Panc1 (cell line): ENCODE measurements at regions of chr16 and their contacts with region 1.

Region 1: GRCh38 chr16:30628627-30629540 is 18.7 kb upstream of the ZNF689 start:
- DNase-seq: peak; percentile 84
- ATAC-seq: peak; percentile 98
- H3K4me3 ChIP-seq: peak overlapping the region; percentile 33 to 61
- H3K27ac ChIP-seq: peak overlapping the region; percentile 76
- H3K4me1 ChIP-seq: peaks cover 5% of the 10 kb centered on the region; the same call in 1 of the 2 replicates
- H3K27me3 ChIP-seq: no peaks in the 10 kb centered on the region
- CTCF ChIP-seq: peak; percentile 95

Region 2: GRCh38 chr16:30355144-30355894 is 273.6 kb before region 1 on chr16 and contains the start of gene CD2BP2:
- CTCF ChIA-PET with region 1: no interaction called
- POLR2A ChIA-PET with region 1: no interaction called
- in situ Hi-C with region 1: no loop called
- intact Hi-C with region 1: no loop called
- DNase-seq: peak; percentile 98
- ATAC-seq: peak; percentile 92
- H3K4me3 ChIP-seq: peak within 1 kb of the TSS; percentile 98 to 99
- H3K27ac ChIP-seq: peak within 1 kb of the TSS; percentile 99
- H3K4me1 ChIP-seq: peaks cover 49% of the 10 kb centered on the region
- H3K27me3 ChIP-seq: no peaks in the 10 kb centered on the region
- CTCF ChIP-seq: no peak
- total RNA-seq, gene CD2BP2: 90.7 TPM

Region 3: GRCh38 chr16:30526823-30527635 is 101.9 kb before region 1 on chr16:
- CTCF ChIA-PET with region 1: no interaction called
- POLR2A ChIA-PET with region 1: interaction called, 11 read pairs
- in situ Hi-C with region 1: no loop called
- intact Hi-C with region 1: no loop called
- DNase-seq: peak; percentile 82
- ATAC-seq: peak; percentile 95
- H3K4me3 ChIP-seq: peak overlapping the region; percentile 69 to 74
- H3K27ac ChIP-seq: peak overlapping the region; percentile 97
- H3K4me1 ChIP-seq: peaks cover 17% of the 10 kb centered on the region
- H3K27me3 ChIP-seq: no peaks in the 10 kb centered on the region
- CTCF ChIP-seq: no peak

Region 4: DNA sequence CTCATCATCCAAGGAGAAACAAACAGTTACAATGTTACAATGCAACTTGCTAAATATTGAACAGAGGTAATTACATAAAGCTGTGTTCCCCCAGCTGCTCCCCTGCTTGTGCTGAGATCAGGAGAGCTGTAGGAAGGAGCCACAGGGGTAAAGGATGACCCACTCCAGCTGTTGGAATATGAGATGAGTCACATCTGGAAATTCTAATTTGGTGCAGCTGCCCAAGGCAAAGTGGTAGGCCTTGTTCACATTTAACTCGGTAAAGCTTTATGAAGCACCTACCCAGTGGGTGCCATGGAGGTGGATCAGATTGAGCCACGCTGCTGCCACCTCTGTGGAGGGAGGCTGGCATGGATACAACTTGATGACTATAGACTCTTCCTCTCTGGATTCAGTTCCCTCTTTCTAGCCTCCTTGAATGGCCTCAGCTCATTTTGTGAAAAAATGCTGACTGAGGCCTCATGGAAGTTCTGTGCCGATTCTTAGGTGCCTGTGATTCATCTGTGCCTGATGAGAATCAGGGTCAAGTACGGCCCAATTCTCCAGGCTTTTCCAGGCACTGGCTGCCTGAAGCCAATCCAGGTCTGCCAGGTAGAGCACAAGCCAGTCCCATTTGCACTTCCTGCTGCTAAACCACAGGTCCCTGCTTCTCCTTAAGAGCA is 26.1 kb before region 1 on chr16:
- CTCF ChIA-PET with region 1: interaction called, 10 read pairs
- POLR2A ChIA-PET with region 1: interaction called, 5 read pairs
- in situ Hi-C with region 1: no loop called
- intact Hi-C with region 1: no loop called
- DNase-seq: no peak
- ATAC-seq: no peak
- H3K4me3 ChIP-seq: no peak overlapping the region
- H3K27ac ChIP-seq: no peak overlapping the region
- H3K4me1 ChIP-seq: peaks cover 3% of the 10 kb centered on the region; the same call in 1 of the 2 replicates
- H3K27me3 ChIP-seq: no peaks in the 10 kb centered on the region
- CTCF ChIP-seq: no peak

Region 5: GRCh38 chr16:30698139-30698815 is 69.4 kb after region 1 on chr16:
- CTCF ChIA-PET with region 1: no interaction called
- POLR2A ChIA-PET with region 1: interaction called, 10 read pairs
- in situ Hi-C with region 1: no loop called
- intact Hi-C with region 1: no loop called
- DNase-seq: peak; percentile 86
- ATAC-seq: peak; percentile 85
- H3K4me3 ChIP-seq: peak overlapping the region; percentile 83 to 91
- H3K27ac ChIP-seq: peak overlapping the region; percentile 97
- H3K4me1 ChIP-seq: peaks cover 19% of the 10 kb centered on the region
- H3K27me3 ChIP-seq: no peaks in the 10 kb centered on the region
- CTCF ChIP-seq: no peak